Naive thymus-derived CD4-positive, alpha-beta T cell (primary cell): ENCODE measurements at regions of chr10 and their contacts with region 1.

Region 1: GRCh38 chr10:129030996-129031843 is 435.8 kb upstream of the MGMT start:
- DNase-seq: peak; percentile 30 to 64 (median 56)
- ATAC-seq: peak; percentile 72
- H3K4me3 ChIP-seq: no peak overlapping the region
- H3K4me3 Mint-ChIP-seq: peak overlapping the region in 6 of 10 donors; percentile 46 to 74 (median 61)
- H3K27ac ChIP-seq: no peak overlapping the region
- H3K27ac Mint-ChIP-seq: peak overlapping the region in 3 of 9 donors; percentile 1 to 58 (median 13)
- H3K4me1 ChIP-seq: peaks cover 5 to 23% of the 10 kb centered on the region in 2 donors
- H3K4me1 Mint-ChIP-seq: peaks cover 11 to 48% (median 39%) of the 10 kb centered on the region in 7 donors
- H3K27me3 ChIP-seq: no peaks in the 10 kb centered on the region
- H3K27me3 Mint-ChIP-seq: peaks cover 15 to 44% (median 24%) of the 10 kb centered on the region in 5 donors

Region 2: DNA sequence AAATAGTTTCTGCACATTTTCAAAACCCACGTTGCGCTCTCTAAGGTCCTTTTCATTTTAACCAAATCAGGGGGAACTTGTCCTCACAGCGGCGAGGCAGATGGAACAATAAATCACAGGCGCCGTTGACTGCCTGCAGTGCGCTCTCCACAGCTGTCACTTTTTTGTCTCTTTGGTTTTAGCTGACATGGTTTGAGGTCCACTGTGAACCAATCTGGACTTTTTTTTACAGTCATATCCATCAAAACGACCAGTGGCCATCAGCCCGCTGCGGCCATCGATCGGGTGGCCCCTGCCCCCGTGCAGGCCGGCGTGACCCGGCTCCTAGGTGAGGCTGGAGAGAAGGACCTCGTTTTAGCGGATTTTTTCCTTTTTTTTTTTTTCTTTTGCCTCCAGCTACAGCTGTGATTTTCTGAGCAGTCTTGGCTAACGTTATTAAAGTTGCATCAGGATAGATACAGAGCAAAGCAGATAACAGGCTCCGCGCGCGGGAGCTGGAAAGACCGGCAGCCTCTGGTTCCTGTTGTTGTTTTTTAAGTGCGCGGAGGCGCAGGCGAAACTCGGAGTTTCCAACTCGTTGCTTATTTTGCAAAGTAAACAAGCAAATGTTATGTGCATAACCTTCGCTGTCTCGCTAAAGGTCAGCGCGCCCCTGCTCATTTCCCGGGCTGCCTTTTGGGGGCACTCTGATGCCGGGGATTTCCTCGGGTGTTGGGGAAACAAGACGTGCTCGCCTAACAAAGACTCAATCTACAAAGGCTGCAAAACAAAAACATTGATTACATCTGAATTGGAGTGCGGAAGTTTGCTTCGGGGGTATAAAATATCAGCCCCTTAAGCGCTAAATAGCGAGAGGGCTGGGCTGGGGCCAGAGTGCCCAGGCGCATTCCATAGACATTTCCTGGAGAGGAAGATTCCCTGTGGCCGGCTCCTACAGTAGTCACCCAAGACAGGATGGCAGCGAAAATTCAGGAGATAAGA is 490.1 kb before region 1 on chr10:
- CTCF ChIA-PET with region 1: no interaction called
- POLR2A ChIA-PET with region 1: no interaction called
- intact Hi-C with region 1: no loop called
- DNase-seq: no peak
- ATAC-seq: no peak
- H3K4me3 ChIP-seq: no peak overlapping the region
- H3K4me3 Mint-ChIP-seq: no peak overlapping the region
- H3K27ac ChIP-seq: no peak overlapping the region
- H3K27ac Mint-ChIP-seq: no peak overlapping the region
- H3K4me1 ChIP-seq: no peaks in the 10 kb centered on the region
- H3K4me1 Mint-ChIP-seq: no peaks in the 10 kb centered on the region
- H3K27me3 ChIP-seq: no peaks in the 10 kb centered on the region
- H3K27me3 Mint-ChIP-seq: peaks cover 27 to 62% (median 53%) of the 10 kb centered on the region in 5 donors

Region 3: DNA sequence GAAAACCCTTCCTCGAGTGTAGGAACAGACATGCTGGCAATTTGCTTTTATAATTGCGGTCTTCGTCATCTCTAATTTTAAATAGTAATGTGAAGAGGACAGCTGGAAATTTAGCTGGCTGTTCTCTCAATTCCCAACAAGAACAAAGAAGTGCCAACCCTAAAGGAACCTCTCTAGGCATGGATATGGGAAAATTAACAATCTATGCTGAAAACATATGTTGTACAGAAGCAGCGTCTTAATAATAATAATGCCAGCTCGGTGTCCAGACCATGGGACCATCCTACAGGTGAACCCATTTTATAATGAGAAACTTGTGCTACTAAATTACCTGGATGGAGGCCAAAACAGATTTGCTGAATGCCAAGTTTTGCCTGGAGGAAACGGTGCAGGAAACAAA is 205.6 kb before region 1 on chr10:
- CTCF ChIA-PET with region 1: no interaction called
- POLR2A ChIA-PET with region 1: no interaction called
- intact Hi-C with region 1: no loop called
- DNase-seq: no peak
- ATAC-seq: no peak
- H3K4me3 ChIP-seq: no peak overlapping the region
- H3K4me3 Mint-ChIP-seq: no peak overlapping the region
- H3K27ac ChIP-seq: no peak overlapping the region
- H3K27ac Mint-ChIP-seq: no peak overlapping the region
- H3K4me1 ChIP-seq: no peaks in the 10 kb centered on the region
- H3K4me1 Mint-ChIP-seq: no peaks in the 10 kb centered on the region
- H3K27me3 ChIP-seq: no peaks in the 10 kb centered on the region
- H3K27me3 Mint-ChIP-seq: peaks cover 0 to 28% (median 5%) of the 10 kb centered on the region in 5 donors

Region 4: GRCh38 chr10:129057856-129058663 is 26.8 kb after region 1 on chr10:
- CTCF ChIA-PET with region 1: interaction called, 7 read pairs
- POLR2A ChIA-PET with region 1: interaction called, 46 read pairs
- intact Hi-C with region 1: loop called (anchors 1 kb)
- DNase-seq: peak in 8 of 9 donors; percentile 27 to 76 (median 56)
- ATAC-seq: peak; percentile 82
- H3K4me3 ChIP-seq: peak overlapping the region; percentile 36
- H3K4me3 Mint-ChIP-seq: peak overlapping the region; percentile 60 to 85 (median 76)
- H3K27ac ChIP-seq: no peak overlapping the region
- H3K27ac Mint-ChIP-seq: peak overlapping the region in 6 of 9 donors; percentile 50 to 80 (median 58)
- H3K4me1 ChIP-seq: peaks cover 5 to 39% of the 10 kb centered on the region in 2 donors
- H3K4me1 Mint-ChIP-seq: peaks cover 12 to 60% (median 47%) of the 10 kb centered on the region in 7 donors
- H3K27me3 ChIP-seq: no peaks in the 10 kb centered on the region
- H3K27me3 Mint-ChIP-seq: peaks cover 0 to 32% (median 0%) of the 10 kb centered on the region in 5 donors

Region 5: GRCh38 chr10:129140921-129141885 is 110.0 kb after region 1 on chr10:
- CTCF ChIA-PET with region 1: no interaction called
- POLR2A ChIA-PET with region 1: no interaction called
- intact Hi-C with region 1: loop called in 1 of 2 experiments (anchors 5 kb)
- DNase-seq: no peak
- ATAC-seq: peak; percentile 60
- H3K4me3 ChIP-seq: no peak overlapping the region
- H3K4me3 Mint-ChIP-seq: peak overlapping the region in 5 of 10 donors; percentile 5 to 73 (median 39)
- H3K27ac ChIP-seq: no peak overlapping the region
- H3K27ac Mint-ChIP-seq: no peak overlapping the region
- H3K4me1 ChIP-seq: no peaks in the 10 kb centered on the region
- H3K4me1 Mint-ChIP-seq: peaks cover 5 to 27% (median 10%) of the 10 kb centered on the region in 7 donors
- H3K27me3 ChIP-seq: no peaks in the 10 kb centered on the region
- H3K27me3 Mint-ChIP-seq: peaks cover 9 to 38% (median 25%) of the 10 kb centered on the region in 5 donors

Region 6: DNA sequence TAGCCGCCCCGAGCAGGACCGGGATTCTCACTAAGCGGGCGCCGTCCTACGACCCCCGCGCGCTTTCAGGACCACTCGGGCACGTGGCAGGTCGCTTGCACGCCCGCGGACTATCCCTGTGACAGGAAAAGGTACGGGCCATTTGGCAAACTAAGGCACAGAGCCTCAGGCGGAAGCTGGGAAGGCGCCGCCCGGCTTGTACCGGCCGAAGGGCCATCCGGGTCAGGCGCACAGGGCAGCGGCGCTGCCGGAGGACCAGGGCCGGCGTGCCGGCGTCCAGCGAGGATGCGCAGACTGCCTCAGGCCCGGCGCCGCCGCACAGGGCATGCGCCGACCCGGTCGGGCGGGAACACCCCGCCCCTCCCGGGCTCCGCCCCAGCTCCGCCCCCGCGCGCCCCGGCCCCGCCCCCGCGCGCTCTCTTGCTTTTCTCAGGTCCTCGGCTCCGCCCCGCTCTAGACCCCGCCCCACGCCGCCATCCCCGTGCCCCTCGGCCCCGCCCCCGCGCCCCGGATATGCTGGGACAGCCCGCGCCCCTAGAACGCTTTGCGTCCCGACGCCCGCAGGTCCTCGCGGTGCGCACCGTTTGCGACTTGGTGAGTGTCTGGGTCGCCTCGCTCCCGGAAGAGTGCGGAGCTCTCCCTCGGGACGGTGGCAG is 435.6 kb after region 1 on chr10 and contains the start of gene MGMT:
- CTCF ChIA-PET with region 1: no interaction called
- POLR2A ChIA-PET with region 1: interaction called, 7 read pairs
- intact Hi-C with region 1: loop called (anchors 1 to 5 kb)
- DNase-seq: peak; percentile 91 to 98 (median 96)
- ATAC-seq: peak; percentile 99
- H3K4me3 ChIP-seq: peak within 1 kb of the TSS; percentile 74
- H3K4me3 Mint-ChIP-seq: peak within 1 kb of the TSS; percentile 74 to 90 (median 87)
- H3K27ac ChIP-seq: peak within 1 kb of the TSS; percentile 85
- H3K27ac Mint-ChIP-seq: peak within 1 kb of the TSS; percentile 71 to 91 (median 84)
- H3K4me1 ChIP-seq: peaks cover 11 to 13% of the 10 kb centered on the region in 2 donors
- H3K4me1 Mint-ChIP-seq: peaks cover 8 to 31% (median 26%) of the 10 kb centered on the region in 7 donors
- H3K27me3 ChIP-seq: no peaks in the 10 kb centered on the region
- H3K27me3 Mint-ChIP-seq: no peaks in the 10 kb centered on the region
- total RNA-seq, gene MGMT: 17.6 to 23.9 (median 21.8) TPM

Region 7: DNA sequence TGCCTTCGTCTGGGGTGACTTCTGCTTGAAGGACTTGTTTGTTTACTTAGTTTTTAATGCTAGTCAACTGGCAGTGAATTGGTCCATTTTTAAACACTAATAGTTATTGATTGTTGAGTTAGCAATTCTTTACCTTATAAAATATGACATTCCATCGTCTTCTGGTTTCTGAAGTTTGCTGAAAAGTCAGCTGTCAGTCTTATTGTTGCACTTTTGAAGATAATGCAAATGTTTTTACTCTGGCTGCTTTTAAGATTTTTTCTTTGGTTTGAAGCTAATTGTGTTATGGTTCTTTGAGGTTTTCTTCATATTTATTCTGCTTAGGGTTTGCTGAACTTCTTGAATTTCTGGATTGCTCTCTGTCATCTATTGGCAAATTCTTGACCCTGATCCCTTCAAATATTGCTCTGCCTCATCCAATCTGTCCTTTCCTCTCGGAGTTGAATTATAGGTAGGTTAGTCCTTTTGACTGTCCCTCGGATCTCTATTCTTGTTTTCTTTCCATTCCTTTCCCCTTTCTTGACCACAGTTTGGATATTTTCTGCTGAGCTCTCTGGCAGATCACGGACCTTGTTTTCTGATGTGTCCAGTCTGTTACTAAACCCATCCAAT is 460.0 kb after region 1 on chr10:
- CTCF ChIA-PET with region 1: no interaction called
- POLR2A ChIA-PET with region 1: no interaction called
- intact Hi-C with region 1: no loop called
- DNase-seq: peak in 1 of 9 donors; percentile 7
- ATAC-seq: no peak
- H3K4me3 ChIP-seq: no peak overlapping the region
- H3K4me3 Mint-ChIP-seq: no peak overlapping the region
- H3K27ac ChIP-seq: no peak overlapping the region
- H3K27ac Mint-ChIP-seq: no peak overlapping the region
- H3K4me1 ChIP-seq: no peaks in the 10 kb centered on the region
- H3K4me1 Mint-ChIP-seq: peaks cover 0 to 28% (median 15%) of the 10 kb centered on the region in 7 donors
- H3K27me3 ChIP-seq: no peaks in the 10 kb centered on the region
- H3K27me3 Mint-ChIP-seq: no peaks in the 10 kb centered on the region

Region 8: GRCh38 chr10:129971381-129972144 is 940.3 kb after region 1 on chr10:
- CTCF ChIA-PET with region 1: no interaction called
- POLR2A ChIA-PET with region 1: no interaction called
- intact Hi-C with region 1: loop called in 1 of 2 experiments (anchors 1 kb)
- DNase-seq: no peak
- ATAC-seq: peak; percentile 71
- H3K4me3 ChIP-seq: no peak overlapping the region
- H3K4me3 Mint-ChIP-seq: peak overlapping the region; percentile 29 to 86 (median 68)
- H3K27ac ChIP-seq: no peak overlapping the region
- H3K27ac Mint-ChIP-seq: peak overlapping the region in 3 of 9 donors; percentile 46 to 85 (median 69)
- H3K4me1 ChIP-seq: no peaks in the 10 kb centered on the region
- H3K4me1 Mint-ChIP-seq: peaks cover 8 to 25% (median 21%) of the 10 kb centered on the region in 7 donors
- H3K27me3 ChIP-seq: peaks cover 0 to 38% of the 10 kb centered on the region in 2 donors
- H3K27me3 Mint-ChIP-seq: peaks cover 51 to 70% (median 61%) of the 10 kb centered on the region in 5 donors

Region 9: GRCh38 chr10:130179640-130180039 is 1148.4 kb after region 1 on chr10:
- CTCF ChIA-PET with region 1: no interaction called
- POLR2A ChIA-PET with region 1: no interaction called
- intact Hi-C with region 1: loop called (anchors 1 to 10 kb)
- DNase-seq: peak in 7 of 9 donors; percentile 39 to 70 (median 63)
- ATAC-seq: peak; percentile 82
- H3K4me3 ChIP-seq: no peak overlapping the region
- H3K4me3 Mint-ChIP-seq: no peak overlapping the region
- H3K27ac ChIP-seq: no peak overlapping the region
- H3K27ac Mint-ChIP-seq: peak overlapping the region in 3 of 9 donors; percentile 20 to 71 (median 66)
- H3K4me1 ChIP-seq: no peaks in the 10 kb centered on the region
- H3K4me1 Mint-ChIP-seq: peaks cover 0 to 20% (median 14%) of the 10 kb centered on the region in 7 donors
- H3K27me3 ChIP-seq: no peaks in the 10 kb centered on the region
- H3K27me3 Mint-ChIP-seq: no peaks in the 10 kb centered on the region